HCT116 (cell line): ENCODE measurements at regions of chr5 and their contacts with region 1.

Region 1: GRCh38 chr5:136062366-136063274 is 33.8 kb downstream of the TGFBI start:
- DNase-seq: peak; percentile 77
- ATAC-seq: peak; percentile 79
- H3K4me3 ChIP-seq: no peak overlapping the region
- H3K27ac ChIP-seq: no peak overlapping the region
- H3K4me1 ChIP-seq: peaks cover 15 to 20% of the 10 kb centered on the region in 2 experiments
- H3K27me3 ChIP-seq: no peaks in the 10 kb centered on the region
- CTCF ChIP-seq: peak; percentile 69 to 96 (median 79)
- POLR2A ChIP-seq: no peak
- RAD21 ChIP-seq: peak; percentile 99

Region 2: DNA sequence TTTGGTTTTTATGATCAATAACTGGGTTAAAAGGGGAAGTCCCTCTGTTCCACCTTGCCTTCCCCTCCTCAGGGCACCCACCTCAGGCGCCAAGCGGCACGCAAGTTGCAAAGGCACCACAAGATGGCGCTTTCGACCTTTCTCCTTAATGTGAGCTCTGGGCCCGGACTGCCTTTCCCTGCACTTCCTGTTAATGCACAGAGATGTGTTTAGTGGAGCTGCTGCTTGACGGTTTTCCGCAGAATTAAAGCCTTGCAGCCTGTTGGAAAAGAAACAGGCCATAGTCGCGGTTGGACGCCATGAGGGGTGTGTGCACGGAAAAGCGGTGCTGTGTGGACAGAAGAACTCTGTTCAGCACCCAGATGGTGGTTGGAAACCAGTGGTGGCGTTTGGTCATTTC is 501.8 kb before region 1 on chr5:
- CTCF ChIA-PET with region 1: interaction called, 4 read pairs
- POLR2A ChIA-PET with region 1: no interaction called
- RAD21 ChIA-PET with region 1: no interaction called
- intact Hi-C with region 1: loop called (anchors 10 kb)
- DNase-seq: peak; percentile 65
- ATAC-seq: peak; percentile 97
- H3K4me3 ChIP-seq: no peak overlapping the region
- H3K27ac ChIP-seq: no peak overlapping the region
- H3K4me1 ChIP-seq: peaks cover 0 to 7% of the 10 kb centered on the region in 2 experiments; a peak in 1 of 4 replicates
- H3K27me3 ChIP-seq: no peaks in the 10 kb centered on the region
- CTCF ChIP-seq: peak; percentile 84 to 90 (median 84)
- POLR2A ChIP-seq: no peak
- RAD21 ChIP-seq: peak; percentile 88

Region 3: DNA sequence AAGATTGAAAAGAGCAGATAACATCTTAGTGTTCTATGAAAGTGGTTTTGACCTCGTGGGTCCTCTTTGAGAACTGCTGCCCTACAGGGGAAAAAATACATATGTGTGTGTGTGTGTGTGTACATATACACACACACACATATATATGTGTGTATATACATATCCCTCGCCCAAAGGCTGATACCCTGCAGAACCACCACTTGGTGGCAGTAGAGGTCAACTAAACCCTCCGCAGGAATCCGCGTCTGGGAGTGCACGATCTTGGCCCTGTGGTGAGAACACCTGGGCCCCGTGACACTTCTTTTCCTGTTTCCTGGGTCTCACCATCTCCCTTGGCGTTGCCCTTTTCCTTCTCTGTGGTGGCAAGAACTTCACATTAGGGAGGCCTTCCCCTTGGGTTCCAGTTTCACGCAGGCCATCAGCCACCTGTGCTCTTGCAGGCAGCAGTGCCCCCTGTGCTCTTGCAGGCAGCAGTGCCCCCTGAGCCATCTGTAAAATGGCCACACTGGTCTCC is 175.2 kb before region 1 on chr5:
- CTCF ChIA-PET with region 1: interaction called, 8 read pairs
- POLR2A ChIA-PET with region 1: no interaction called
- RAD21 ChIA-PET with region 1: no interaction called
- intact Hi-C with region 1: loop called (anchors 1 kb)
- DNase-seq: peak; percentile 72
- ATAC-seq: peak; percentile 97
- H3K4me3 ChIP-seq: no peak overlapping the region
- H3K27ac ChIP-seq: no peak overlapping the region
- H3K4me1 ChIP-seq: peaks cover 6 to 12% of the 10 kb centered on the region in 2 experiments; a peak in 3 of 4 replicates
- H3K27me3 ChIP-seq: no peaks in the 10 kb centered on the region
- CTCF ChIP-seq: peak; percentile 75 to 94 (median 87)
- POLR2A ChIP-seq: no peak
- RAD21 ChIP-seq: peak; percentile 95

Region 4: DNA sequence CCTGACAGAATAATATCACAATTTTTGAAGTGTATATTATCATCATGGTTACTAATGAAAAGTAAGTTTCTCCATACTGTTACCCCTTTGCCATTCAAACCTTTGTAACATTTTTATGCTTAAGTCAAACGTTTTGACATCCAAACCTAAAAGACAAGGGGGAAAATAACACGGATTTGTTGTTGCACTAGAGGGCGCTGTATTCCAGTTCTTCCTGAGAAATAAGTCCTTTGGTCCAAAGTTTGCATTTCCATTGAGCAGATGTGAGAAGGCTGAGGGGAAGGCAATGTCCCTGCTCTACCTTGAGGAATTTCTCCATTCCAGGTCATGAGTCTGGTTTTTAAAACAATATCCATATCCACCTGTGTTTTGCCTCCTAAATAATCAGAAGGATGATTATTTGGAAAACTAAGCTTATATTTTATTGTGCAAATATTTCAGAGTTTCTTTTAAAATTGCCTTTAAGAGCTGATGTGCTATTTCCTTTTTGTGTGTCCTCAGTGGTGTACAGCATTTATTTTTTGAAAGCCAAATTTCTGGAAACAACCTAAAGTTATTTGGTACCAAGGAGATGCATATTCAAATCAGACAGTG is 117.6 kb before region 1 on chr5:
- CTCF ChIA-PET with region 1: interaction called, 8 read pairs
- POLR2A ChIA-PET with region 1: no interaction called
- RAD21 ChIA-PET with region 1: no interaction called
- intact Hi-C with region 1: loop called (anchors 1 kb)
- DNase-seq: peak; percentile 71
- ATAC-seq: peak; percentile 73
- H3K4me3 ChIP-seq: no peak overlapping the region
- H3K27ac ChIP-seq: no peak overlapping the region
- H3K4me1 ChIP-seq: no peaks in the 10 kb centered on the region
- H3K27me3 ChIP-seq: peaks cover 27% of the 10 kb centered on the region
- CTCF ChIP-seq: peak; percentile 64 to 90 (median 87)
- POLR2A ChIP-seq: no peak
- RAD21 ChIP-seq: peak; percentile 82

Region 5: GRCh38 chr5:135977375-135977928 is 85.2 kb before region 1 on chr5:
- CTCF ChIA-PET with region 1: interaction called, 14 read pairs
- POLR2A ChIA-PET with region 1: no interaction called
- RAD21 ChIA-PET with region 1: interaction called in 1 of 2 experiments, 4 read pairs
- intact Hi-C with region 1: loop called (anchors 1 kb)
- DNase-seq: peak; percentile 73
- ATAC-seq: peak; percentile 100
- H3K4me3 ChIP-seq: no peak overlapping the region
- H3K27ac ChIP-seq: no peak overlapping the region
- H3K4me1 ChIP-seq: peaks cover 0 to 4% of the 10 kb centered on the region in 2 experiments; a peak in 1 of 4 replicates
- H3K27me3 ChIP-seq: peaks cover 45% of the 10 kb centered on the region
- CTCF ChIP-seq: peak; percentile 80 to 99 (median 96)
- POLR2A ChIP-seq: no peak
- RAD21 ChIP-seq: peak; percentile 85

Region 6: DNA sequence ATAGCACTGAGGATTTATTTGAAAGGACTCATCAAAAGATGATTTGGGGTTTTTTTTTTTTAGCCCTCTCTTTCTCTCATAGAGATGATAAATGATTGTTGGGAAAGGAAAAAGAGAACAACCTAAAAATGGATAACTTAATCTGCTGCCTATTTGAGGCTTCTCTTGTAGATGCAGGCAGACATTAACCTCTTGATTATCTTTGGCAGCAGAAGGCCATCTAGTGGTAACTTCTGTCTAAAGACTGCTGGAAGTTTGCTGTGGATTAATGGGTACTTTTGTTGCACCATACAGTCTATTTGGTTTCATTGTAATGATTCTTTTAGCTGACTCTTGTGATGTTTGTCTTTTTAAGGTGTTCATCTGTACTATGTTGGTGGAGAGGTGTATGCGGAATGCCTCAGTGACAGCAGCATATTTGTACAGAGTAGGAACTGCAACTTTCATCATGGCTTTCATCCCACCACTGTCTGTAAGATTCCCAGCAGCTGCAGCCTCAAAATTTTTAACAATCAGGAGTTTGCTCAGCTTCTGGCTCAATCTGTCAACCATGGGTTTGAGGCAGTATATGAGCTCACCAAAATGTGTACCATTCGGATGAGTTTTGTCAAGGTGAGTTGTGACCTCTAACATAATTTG is 111.5 kb after region 1 on chr5:
- CTCF ChIA-PET with region 1: interaction called, 3 read pairs
- POLR2A ChIA-PET with region 1: no interaction called
- RAD21 ChIA-PET with region 1: no interaction called
- intact Hi-C with region 1: loop called (anchors 5 kb)
- DNase-seq: peak; percentile 15
- ATAC-seq: peak; percentile 86
- H3K4me3 ChIP-seq: no peak overlapping the region
- H3K27ac ChIP-seq: no peak overlapping the region
- H3K4me1 ChIP-seq: no peaks in the 10 kb centered on the region
- H3K27me3 ChIP-seq: no peaks in the 10 kb centered on the region
- CTCF ChIP-seq: peak; percentile 54 to 71 (median 65); a peak in 5 of 6 replicates
- POLR2A ChIP-seq: no peak
- RAD21 ChIP-seq: peak; percentile 70

Region 7: DNA sequence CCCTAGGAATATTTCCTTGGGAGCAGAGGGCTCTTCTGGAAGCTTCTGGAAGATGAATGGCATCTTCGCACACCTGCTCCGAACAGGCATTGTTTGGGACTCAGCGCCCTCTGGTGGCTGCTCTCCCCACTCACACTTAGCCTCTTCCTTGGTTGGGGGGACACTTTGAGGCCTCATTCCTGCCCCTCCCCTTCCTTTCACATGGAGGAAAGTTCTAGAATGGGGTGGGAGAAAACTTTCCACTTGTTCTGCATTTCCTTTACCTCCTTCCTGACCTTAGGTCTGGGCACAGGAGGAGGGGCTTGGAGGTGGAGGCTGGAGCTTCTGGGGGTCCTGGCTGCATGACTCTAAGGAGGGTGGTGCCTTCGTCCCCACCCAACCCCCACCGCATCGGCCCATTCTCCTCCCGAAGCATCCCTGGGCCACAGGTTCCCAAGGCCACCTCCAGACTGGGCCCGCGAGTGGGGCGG is 149.7 kb after region 1 on chr5:
- CTCF ChIA-PET with region 1: interaction called, 4 read pairs
- POLR2A ChIA-PET with region 1: no interaction called
- RAD21 ChIA-PET with region 1: no interaction called
- intact Hi-C with region 1: loop called (anchors 5 kb)
- DNase-seq: peak; percentile 24
- ATAC-seq: peak; percentile 83
- H3K4me3 ChIP-seq: no peak overlapping the region
- H3K27ac ChIP-seq: no peak overlapping the region
- H3K4me1 ChIP-seq: no peaks in the 10 kb centered on the region
- H3K27me3 ChIP-seq: no peaks in the 10 kb centered on the region
- CTCF ChIP-seq: peak; percentile 71 to 97 (median 92); a peak in 5 of 6 replicates
- POLR2A ChIP-seq: no peak
- RAD21 ChIP-seq: peak; percentile 87

Region 8: GRCh38 chr5:136655429-136655828 is 592.8 kb after region 1 on chr5:
- CTCF ChIA-PET with region 1: no interaction called
- POLR2A ChIA-PET with region 1: no interaction called
- RAD21 ChIA-PET with region 1: no interaction called
- intact Hi-C with region 1: no loop called
- DNase-seq: no peak
- ATAC-seq: no peak
- H3K4me3 ChIP-seq: no peak overlapping the region
- H3K27ac ChIP-seq: no peak overlapping the region
- H3K4me1 ChIP-seq: no peaks in the 10 kb centered on the region
- H3K27me3 ChIP-seq: peaks cover 4% of the 10 kb centered on the region; the same call in 1 of the 2 replicates
- CTCF ChIP-seq: no peak
- POLR2A ChIP-seq: no peak
- RAD21 ChIP-seq: no peak